Activated naive CD8-positive, alpha-beta T cell treated with anti-CD3 and anti-CD28 coated beads, Interleukin-2, amount 10 ng/mL, durations not matched to agents 7 days and 5 days (primary cell): ENCODE measurements at regions of chr17 and their contacts with region 1.

Region 1: GRCh38 chr17:39199820-39200069 is 338 bp upstream of the RPL19 start:
- DNase-seq: peak; percentile 80
- ATAC-seq: peak; percentile 64
- H3K4me3 Mint-ChIP-seq: peak overlapping the region; percentile 95
- H3K27ac Mint-ChIP-seq: peak overlapping the region; percentile 97
- H3K4me1 Mint-ChIP-seq: peaks cover 54% of the 10 kb centered on the region
- H3K27me3 Mint-ChIP-seq: no peaks in the 10 kb centered on the region

Region 2: GRCh38 chr17:39144416-39144840 is 55.3 kb before region 1 on chr17:
- POLR2A ChIA-PET with region 1: no interaction called
- DNase-seq: no peak
- ATAC-seq: no peak
- H3K4me3 Mint-ChIP-seq: no peak overlapping the region
- H3K27ac Mint-ChIP-seq: no peak overlapping the region
- H3K4me1 Mint-ChIP-seq: peaks cover 6% of the 10 kb centered on the region
- H3K27me3 Mint-ChIP-seq: peaks cover 3% of the 10 kb centered on the region

Region 3: GRCh38 chr17:39164675-39165143 is 35.0 kb before region 1 on chr17:
- POLR2A ChIA-PET with region 1: interaction called, 14 read pairs
- DNase-seq: peak; percentile 80
- ATAC-seq: peak; percentile 95
- H3K4me3 Mint-ChIP-seq: peak overlapping the region; percentile 89
- H3K27ac Mint-ChIP-seq: peak overlapping the region; percentile 52
- H3K4me1 Mint-ChIP-seq: peaks cover 28% of the 10 kb centered on the region
- H3K27me3 Mint-ChIP-seq: peaks cover 28% of the 10 kb centered on the region

Region 4: DNA sequence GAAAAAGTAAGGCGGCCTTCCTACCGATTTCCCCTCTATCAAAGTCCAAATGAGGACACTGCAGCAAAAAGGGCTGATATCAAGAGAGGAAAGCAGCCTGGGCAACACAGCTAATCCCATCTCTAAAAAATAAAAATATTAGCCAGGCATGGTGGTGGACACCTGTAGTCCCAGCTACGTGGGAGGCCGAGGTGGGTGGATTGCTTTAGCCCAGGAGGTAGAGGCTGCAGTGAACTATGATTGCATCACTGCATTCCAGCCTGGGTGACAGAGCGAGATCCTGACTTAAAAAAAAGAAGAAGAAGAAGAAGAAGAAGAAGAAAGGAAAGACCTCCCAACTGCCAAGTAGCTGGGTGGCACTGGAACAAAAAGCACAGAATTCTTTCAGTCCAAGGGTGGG is 16.7 kb before region 1 on chr17:
- POLR2A ChIA-PET with region 1: no interaction called
- DNase-seq: no peak
- ATAC-seq: no peak
- H3K4me3 Mint-ChIP-seq: no peak overlapping the region
- H3K27ac Mint-ChIP-seq: no peak overlapping the region
- H3K4me1 Mint-ChIP-seq: peaks cover 4% of the 10 kb centered on the region
- H3K27me3 Mint-ChIP-seq: no peaks in the 10 kb centered on the region

Region 5: DNA sequence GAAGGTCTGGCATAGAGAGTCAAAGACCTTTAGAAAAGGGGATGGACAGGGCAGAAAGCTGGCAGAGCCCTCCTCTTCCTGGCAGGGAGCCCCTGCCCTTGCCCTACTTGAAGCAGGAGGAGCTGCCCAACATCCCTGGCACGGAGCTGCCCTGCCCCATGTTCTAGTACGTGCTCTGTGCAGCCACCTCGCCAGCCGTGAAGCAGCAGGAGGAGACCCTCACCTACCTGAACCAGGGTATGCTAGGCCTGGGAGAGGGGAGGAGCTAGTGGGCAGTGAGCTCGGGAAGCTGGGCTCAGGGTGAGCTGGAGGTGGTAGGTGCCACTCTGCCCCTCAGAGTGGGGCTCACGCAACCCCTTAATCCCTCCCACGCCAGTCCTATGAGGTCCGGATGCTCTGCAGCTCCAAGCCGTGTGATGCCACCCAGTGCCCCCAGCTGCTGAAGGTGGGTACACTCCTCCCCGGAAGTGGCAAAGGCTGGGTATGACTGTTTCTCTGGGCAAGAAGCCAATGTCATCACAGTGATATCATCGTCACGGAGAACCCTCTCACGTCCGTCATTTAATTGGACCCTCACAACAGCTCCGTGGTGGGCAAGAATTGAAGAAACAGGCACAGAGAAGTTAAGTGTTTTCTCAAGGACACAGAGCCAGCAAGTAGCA is 38.7 kb after region 1 on chr17:
- POLR2A ChIA-PET with region 1: interaction called, 10 read pairs
- DNase-seq: peak; percentile 43
- ATAC-seq: peak; percentile 41
- H3K4me3 Mint-ChIP-seq: peak overlapping the region; percentile 39
- H3K27ac Mint-ChIP-seq: peak overlapping the region; percentile 57
- H3K4me1 Mint-ChIP-seq: peaks cover 19% of the 10 kb centered on the region
- H3K27me3 Mint-ChIP-seq: peaks cover 2% of the 10 kb centered on the region